ENCODE measurements at regions of chr12 and their contacts with region 1.

Region 1: DNA sequence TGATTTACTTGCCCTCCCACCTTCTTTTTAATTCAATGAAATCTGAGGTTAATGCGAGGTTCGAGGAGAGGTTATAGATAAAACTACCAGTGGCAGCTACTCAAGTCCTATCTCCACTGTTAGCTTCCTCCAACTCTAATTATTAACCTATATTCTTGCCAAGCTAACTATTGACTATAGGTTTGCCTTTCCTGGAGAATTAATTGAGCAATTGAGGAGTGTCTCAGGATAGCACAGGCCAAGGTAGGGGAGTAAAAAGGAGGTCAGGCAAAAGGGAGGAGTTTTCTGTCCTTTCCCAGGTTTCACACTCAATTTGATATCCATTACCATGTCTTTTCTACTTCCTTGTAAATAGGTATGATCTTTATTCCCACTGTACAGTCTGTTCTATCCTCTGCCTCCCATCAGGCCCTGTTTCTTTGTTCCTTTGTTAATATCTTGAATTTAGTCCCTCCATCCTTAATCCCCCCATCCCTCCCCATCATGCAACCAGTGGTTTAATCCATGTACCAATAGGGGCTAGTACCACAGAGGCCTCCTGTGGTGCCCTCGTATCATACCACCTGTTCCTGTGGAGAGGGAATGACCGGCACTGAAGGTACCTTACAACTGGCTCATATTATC is 3.7 kb upstream of the SUOX start:
- DNase-seq: no peak
- H3K4me3 ChIP-seq: no peak overlapping the region
- H3K27ac ChIP-seq: no peak overlapping the region
- H3K4me1 ChIP-seq: peaks cover 9% of the 10 kb centered on the region in 2 donors
- H3K27me3 ChIP-seq: no peaks in the 10 kb centered on the region
- CTCF ChIP-seq: no peak
- POLR2A ChIP-seq: no peak

Region 2: DNA sequence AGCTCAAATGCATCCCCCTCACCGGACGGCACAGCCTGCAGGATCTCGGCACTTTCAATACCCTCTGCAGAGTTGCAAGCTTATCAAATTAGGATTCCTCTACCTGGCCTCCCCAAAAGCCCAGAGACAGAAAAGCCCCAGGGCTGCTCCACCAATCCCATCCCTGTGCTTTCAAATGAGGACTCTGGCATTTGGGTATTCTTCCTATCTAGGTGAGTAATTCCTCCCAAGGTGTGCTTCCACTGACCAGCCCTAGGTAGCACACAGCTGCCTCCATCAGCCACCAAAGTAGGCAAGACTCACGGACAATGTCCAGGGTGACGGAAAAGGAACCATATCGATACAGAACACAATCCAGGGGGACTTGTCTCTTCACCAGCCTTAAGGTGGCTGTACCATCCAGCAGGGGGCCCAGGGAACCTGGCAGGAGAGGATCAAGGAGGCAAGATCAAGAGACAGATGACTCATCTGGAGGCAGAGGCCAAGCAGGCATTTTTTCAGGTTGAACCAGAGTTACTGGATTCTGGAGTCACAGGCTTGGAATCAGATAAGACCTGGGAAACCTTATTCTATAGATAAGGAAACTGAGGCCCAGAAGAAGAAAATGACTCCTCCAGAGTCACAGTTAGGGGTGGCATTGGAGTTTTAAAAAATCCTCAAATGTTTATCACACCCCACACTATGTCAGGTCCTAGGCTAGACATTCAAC is 37.4 kb before region 1 on chr12:
- intact Hi-C with region 1: no loop called
- DNase-seq: peak; percentile 18 to 20
- H3K4me3 ChIP-seq: no peak overlapping the region
- H3K27ac ChIP-seq: no peak overlapping the region
- H3K4me1 ChIP-seq: peaks cover 0 to 12% of the 10 kb centered on the region in 2 donors
- H3K27me3 ChIP-seq: no peaks in the 10 kb centered on the region
- CTCF ChIP-seq: peak in 1 of 6 experiments; percentile 5
- POLR2A ChIP-seq: no peak

Region 3: DNA sequence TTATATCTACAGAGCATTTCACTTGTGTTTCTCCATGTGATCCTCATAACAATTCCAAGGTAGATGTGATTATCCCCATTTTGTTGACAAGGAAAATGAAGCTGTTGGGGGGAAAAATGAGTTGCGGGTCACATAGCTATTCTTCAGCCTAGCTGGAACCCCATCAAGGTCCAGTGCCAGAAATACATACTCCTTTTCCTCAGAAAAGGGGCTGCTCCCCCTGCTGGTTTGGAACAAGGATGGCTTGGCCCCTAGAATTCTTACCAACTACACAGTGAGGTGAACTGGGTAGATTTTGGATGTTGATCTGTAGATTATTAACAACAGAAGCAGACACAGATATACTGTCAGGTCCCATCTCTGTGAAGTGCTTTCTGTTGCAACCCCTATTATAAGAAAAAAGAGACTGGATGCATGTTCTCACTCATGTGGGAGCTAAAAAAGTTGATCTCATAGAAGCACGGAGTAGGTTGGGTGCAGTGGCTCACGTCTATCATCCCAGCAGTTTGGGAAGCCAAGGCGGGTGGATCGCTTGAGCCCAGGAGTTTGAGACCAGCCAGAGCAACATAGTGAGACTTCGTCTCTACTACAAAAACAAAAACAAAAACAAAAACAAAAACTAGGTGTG is 36.4 kb after region 1 on chr12:
- intact Hi-C with region 1: loop called (anchors 5 kb)
- DNase-seq: peak; percentile 48 to 60
- H3K4me3 ChIP-seq: no peak overlapping the region
- H3K27ac ChIP-seq: no peak overlapping the region
- H3K4me1 ChIP-seq: no peaks in the 10 kb centered on the region
- H3K27me3 ChIP-seq: no peaks in the 10 kb centered on the region
- CTCF ChIP-seq: peak in 5 of 6 experiments; percentile 24 to 65 (median 61)
- POLR2A ChIP-seq: no peak

Measured in thyroid gland (tissue), 4 donors.